SK-MEL-5 (cell line): ENCODE measurements at regions of chr1 and their contacts with region 1.

Region 1: GRCh38 chr1:219385786-219386427 is 212.2 kb downstream of the LYPLAL1 start:
- DNase-seq: peak; percentile 86

Region 2: DNA sequence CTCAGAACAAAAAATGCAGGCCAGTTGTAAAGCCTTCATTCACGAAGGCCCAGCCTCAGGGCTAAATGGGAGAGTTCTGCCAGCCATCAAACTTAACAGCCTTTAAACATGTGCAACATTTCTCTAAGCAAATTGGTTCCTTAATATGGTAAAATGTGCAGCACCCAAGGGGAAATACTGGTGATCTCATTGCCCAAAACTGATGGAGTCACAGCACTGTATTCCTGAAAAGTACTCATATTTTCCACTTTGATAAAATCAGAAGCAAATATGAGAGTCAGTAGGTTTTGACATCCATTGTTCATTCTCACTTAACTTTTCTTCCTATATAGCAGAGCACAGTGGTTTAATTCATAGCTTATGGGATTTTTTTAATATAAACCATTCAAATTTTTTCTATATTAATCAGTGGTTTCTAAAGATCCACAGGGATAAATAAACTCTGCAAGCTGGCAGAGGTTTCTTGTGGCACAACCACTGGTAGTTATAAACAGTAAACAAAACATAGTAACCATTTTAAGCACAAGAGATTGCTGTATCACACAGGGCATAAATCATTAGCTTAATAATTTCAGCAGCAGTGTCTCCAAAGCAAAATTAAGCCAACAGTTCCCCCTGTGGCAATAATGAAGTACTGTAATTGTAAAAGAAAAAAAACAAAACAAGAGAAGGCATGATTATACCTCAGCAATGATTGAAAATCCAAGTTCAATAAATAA is 319.1 kb before region 1 on chr1:
- in situ Hi-C with region 1: loop called (anchors 10 kb)
- DNase-seq: peak; percentile 61